Transverse colon (tissue), 4 donors: ENCODE measurements at regions of chr1 and their contacts with region 1.

Region 1: DNA sequence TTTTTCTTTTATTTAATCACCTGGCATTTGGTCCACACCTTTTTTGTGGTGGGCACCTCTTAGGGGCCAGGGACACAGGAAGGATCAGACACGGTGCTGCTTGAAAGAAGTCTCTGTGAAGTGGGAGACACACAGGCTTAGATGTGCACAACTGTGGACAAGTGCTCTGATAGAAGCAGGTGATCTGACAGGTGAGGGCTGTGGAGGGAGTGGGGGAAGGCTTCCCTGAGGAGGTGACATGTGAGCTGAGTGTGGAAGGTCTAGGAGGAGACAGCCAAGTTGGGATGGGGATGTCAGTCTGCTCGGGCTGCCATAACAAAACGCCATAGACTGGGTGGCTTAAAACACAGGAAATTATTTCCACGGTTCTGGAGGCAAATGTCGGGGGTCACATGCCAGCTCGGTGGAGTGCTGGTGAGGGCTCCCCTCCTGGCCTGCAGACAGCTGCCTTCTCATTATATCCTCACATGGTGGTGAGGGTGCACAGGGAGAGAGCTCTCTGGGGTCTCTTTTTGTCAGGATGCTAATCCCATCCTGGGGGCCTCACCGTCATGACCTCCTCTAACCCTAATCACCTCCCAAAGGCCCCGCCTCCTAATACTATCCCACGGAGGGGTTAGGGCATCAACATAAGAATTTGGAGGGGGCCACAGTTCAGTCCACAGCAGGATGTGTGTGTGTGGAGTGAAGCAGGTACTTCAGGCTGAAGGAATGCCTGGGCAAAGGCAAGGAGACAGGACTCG is 5.2 kb upstream of the KIAA1614 start:
- DNase-seq: no peak
- H3K4me3 ChIP-seq: no peak overlapping the region
- H3K27ac ChIP-seq: no peak overlapping the region
- H3K4me1 ChIP-seq: peaks cover 3 to 14% (median 5%) of the 10 kb centered on the region in 4 donors
- H3K27me3 ChIP-seq: peaks cover 6% of the 10 kb centered on the region
- CTCF ChIP-seq: no peak
- EP300 ChIP-seq: no peak
- POLR2A ChIP-seq: no peak

Region 2: GRCh38 chr1:180839547-180839946 is 67.9 kb before region 1 on chr1:
- in situ Hi-C with region 1: no loop called
- intact Hi-C with region 1: loop called (anchors 2 kb)
- DNase-seq: no peak
- H3K4me3 ChIP-seq: no peak overlapping the region
- H3K27ac ChIP-seq: no peak overlapping the region
- H3K4me1 ChIP-seq: no peaks in the 10 kb centered on the region
- H3K27me3 ChIP-seq: no peaks in the 10 kb centered on the region
- CTCF ChIP-seq: no peak
- EP300 ChIP-seq: no peak
- POLR2A ChIP-seq: no peak